Activated CD4-positive, alpha-beta T cell treated with anti-CD3 and anti-CD28 coated beads for 36 hours (primary cell): ENCODE measurements at regions of chr9 and their contacts with region 1.

Region 1: DNA sequence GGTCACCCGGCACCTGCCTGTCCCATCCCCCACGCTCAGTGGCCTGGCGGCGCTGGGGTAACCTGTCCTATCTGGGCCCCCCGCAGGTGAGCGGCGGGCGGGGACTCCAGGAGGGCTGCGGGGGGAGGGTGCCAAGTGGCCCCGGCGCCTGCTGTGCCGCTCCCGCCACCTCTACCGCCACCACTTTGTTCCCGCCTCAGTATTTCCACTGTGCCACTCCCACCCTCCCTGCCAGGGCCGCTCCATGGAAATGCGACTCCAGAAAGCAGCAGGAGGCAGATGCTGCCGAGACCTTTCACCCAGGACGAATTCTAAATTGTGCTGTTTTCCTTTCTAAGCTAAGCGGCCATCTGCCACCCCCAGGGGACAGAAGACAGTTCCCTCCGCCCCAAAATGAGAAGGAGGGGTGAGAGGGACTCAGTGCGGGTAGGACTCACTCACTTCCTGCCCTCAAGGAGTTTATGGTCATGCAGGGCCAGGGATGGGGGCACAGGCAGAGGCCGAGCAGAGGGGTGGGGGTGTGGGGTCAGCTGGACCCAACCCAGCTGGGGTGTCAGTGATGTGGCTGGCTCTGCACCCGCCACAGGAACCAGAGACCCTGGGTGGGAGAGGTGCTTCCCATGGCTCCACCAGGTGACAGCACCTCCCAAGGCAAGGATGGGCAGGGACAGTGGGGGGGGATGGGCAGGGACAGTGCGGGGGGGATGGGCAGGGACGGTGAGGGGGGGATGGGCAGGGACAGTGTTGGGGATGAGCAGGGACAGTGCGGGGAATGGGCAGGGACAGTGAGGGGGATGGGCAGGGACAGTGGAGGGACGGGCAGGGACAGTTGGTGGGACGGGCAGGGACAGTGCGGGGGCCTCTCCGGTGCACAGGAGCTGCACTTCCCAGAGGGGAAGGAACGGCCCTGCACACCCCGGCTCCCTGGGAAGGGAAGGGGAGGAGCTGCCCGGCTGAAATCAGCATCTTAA is 17.8 kb downstream of the NOTCH1 start:
- DNase-seq: peak; percentile 41
- ATAC-seq: no peak
- H3K4me3 Mint-ChIP-seq: no peak overlapping the region
- H3K27ac Mint-ChIP-seq: no peak overlapping the region
- H3K4me1 Mint-ChIP-seq: peaks cover 24% of the 10 kb centered on the region
- H3K27me3 Mint-ChIP-seq: no peaks in the 10 kb centered on the region

Region 2: DNA sequence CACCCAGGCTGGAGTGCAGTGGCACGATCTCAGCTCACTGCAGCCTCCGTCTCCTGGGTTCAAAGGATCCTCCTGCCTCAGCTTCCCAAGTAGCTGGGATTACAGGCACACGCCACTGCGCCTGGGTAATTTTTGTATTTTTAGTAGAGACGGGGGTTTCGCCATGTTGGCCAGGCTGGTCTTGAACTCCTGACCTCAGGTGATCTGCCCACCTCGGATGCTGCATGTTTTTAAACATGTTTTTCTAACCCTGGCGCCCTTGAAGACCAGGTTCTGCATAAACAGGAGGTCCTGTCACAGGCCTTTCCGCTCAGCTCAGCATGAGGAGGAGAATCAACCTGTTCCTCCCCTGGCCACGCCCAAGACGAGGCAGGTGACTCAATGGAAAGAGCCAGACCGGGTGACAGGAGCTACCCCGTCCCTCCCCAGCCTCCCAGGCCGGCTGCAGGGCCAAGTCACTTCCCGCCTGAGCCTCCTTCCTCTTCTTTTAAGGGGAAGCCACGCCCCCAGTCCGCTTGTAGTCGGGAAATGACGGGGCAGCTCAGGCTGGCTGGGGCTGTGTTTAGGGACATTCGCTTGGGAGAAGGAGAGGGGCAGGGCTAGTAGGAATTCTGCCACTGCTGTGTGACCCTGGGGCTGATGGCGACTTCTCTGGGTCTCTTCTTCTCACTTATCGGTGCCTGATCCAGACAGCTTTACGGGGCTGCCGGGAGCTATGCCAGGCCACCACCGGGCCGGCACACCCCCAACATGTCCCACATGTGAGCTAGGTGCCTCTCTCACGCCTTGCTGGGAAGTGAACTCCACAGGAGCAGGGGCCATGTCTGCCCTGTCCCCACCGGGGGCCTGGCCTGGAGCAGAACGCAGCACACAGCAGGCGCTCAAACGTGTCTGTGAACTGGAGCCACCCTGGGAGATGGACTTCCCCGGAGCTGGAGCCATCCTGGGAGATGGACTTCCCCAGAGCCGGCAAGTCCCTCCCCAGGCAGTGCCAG is 11.7 kb after region 1 on chr9:
- CTCF ChIA-PET with region 1: interaction called, 14 read pairs
- POLR2A ChIA-PET with region 1: interaction called, 13 read pairs
- intact Hi-C with region 1: no loop called
- DNase-seq: peak; percentile 99
- ATAC-seq: peak; percentile 81
- H3K4me3 Mint-ChIP-seq: peak overlapping the region; percentile 65
- H3K27ac Mint-ChIP-seq: peak overlapping the region; percentile 99
- H3K4me1 Mint-ChIP-seq: peaks cover 74% of the 10 kb centered on the region
- H3K27me3 Mint-ChIP-seq: no peaks in the 10 kb centered on the region